ENCODE measurements at regions of chr3 and their contacts with region 1.

Region 1: GRCh38 chr3:19946832-19947548 is at the start of gene RAB5A:
- DNase-seq: peak; percentile 94 to 100 (median 97)
- ATAC-seq: peak; percentile 90
- H3K4me3 ChIP-seq: peak within 1 kb of the TSS; percentile 91
- H3K27ac ChIP-seq: peak within 1 kb of the TSS; percentile 98
- H3K4me1 ChIP-seq: peaks cover 9 to 11% of the 10 kb centered on the region in 2 experiments; a peak in 4 of 5 replicates
- H3K27me3 ChIP-seq: no peaks in the 10 kb centered on the region
- CTCF ChIP-seq: 0 out of 6 replicates have a peak, but pooled peaks of 1 of the 3 experiments have one; percentile 1
- EP300 ChIP-seq: no peak; the same call in 1 of the 2 replicates
- POLR2A ChIP-seq: peak; percentile 93
- RAD21 ChIP-seq: peak; percentile 4 to 34; a peak in 2 of 4 replicates
- polyA plus RNA-seq, gene RAB5A: 28.3 to 31.3 TPM

Region 2: GRCh38 chr3:19901337-19901736 is 45.7 kb before region 1 on chr3:
- CTCF ChIA-PET with region 1: no interaction called
- POLR2A ChIA-PET with region 1: no interaction called
- in situ Hi-C with region 1: no loop called
- intact Hi-C with region 1: loop called (anchors 5 kb)
- DNase-seq: no peak
- ATAC-seq: peak; percentile 39; the same call in 1 of the 3 replicates
- H3K4me3 ChIP-seq: no peak overlapping the region
- H3K27ac ChIP-seq: no peak overlapping the region
- H3K4me1 ChIP-seq: no peaks in the 10 kb centered on the region; a peak in 1 of 5 replicates
- H3K27me3 ChIP-seq: no peaks in the 10 kb centered on the region
- CTCF ChIP-seq: peak in 1 of 3 experiments; percentile 18; a peak in 1 of 6 replicates
- EP300 ChIP-seq: no peak
- POLR2A ChIP-seq: no peak
- RAD21 ChIP-seq: peak in 1 of 2 experiments; percentile 21; a peak in 1 of 4 replicates

Region 3: DNA sequence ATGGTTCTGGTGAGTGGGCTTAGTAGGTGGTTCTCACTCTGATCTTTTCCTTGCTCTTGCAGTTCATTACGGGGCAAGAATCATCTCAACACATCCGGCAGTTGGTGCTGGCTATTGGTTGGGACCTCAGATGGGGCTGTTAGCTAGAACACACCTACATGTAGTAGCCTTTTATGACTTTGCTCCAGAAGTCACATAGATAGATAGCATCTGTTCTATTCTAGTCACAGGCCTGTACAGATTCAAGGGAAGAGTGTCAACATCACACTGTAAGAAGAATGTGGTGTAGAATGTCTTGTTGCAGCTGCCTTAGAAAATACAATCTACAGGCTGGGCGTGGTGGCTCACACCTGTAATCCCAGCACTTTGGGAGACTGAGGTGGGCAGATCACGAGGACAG is 15.0 kb after region 1 on chr3:
- CTCF ChIA-PET with region 1: interaction called, 3 read pairs
- POLR2A ChIA-PET with region 1: interaction called, 34 read pairs
- in situ Hi-C with region 1: no loop called
- intact Hi-C with region 1: no loop called
- DNase-seq: peak in 2 of 4 experiments; percentile 18 to 30
- ATAC-seq: peak; percentile 50
- H3K4me3 ChIP-seq: no peak overlapping the region
- H3K27ac ChIP-seq: no peak overlapping the region
- H3K4me1 ChIP-seq: peaks cover 7 to 24% of the 10 kb centered on the region in 2 experiments; a peak in 4 of 5 replicates
- H3K27me3 ChIP-seq: no peaks in the 10 kb centered on the region
- CTCF ChIP-seq: no peak
- EP300 ChIP-seq: no peak
- POLR2A ChIP-seq: no peak
- RAD21 ChIP-seq: no peak

Region 4: GRCh38 chr3:20023623-20024405 is 76.8 kb after region 1 on chr3:
- CTCF ChIA-PET with region 1: no interaction called
- POLR2A ChIA-PET with region 1: interaction called, 4 read pairs
- in situ Hi-C with region 1: no loop called
- intact Hi-C with region 1: loop called (anchors 5 kb)
- DNase-seq: peak in 2 of 4 experiments; percentile 59 to 77
- ATAC-seq: peak; percentile 80
- H3K4me3 ChIP-seq: no peak overlapping the region
- H3K27ac ChIP-seq: peak overlapping the region; percentile 66
- H3K4me1 ChIP-seq: peaks cover 15 to 24% of the 10 kb centered on the region in 2 experiments; a peak in 4 of 5 replicates
- H3K27me3 ChIP-seq: no peaks in the 10 kb centered on the region
- CTCF ChIP-seq: no peak
- EP300 ChIP-seq: no peak
- POLR2A ChIP-seq: no peak
- RAD21 ChIP-seq: no peak

Region 5: DNA sequence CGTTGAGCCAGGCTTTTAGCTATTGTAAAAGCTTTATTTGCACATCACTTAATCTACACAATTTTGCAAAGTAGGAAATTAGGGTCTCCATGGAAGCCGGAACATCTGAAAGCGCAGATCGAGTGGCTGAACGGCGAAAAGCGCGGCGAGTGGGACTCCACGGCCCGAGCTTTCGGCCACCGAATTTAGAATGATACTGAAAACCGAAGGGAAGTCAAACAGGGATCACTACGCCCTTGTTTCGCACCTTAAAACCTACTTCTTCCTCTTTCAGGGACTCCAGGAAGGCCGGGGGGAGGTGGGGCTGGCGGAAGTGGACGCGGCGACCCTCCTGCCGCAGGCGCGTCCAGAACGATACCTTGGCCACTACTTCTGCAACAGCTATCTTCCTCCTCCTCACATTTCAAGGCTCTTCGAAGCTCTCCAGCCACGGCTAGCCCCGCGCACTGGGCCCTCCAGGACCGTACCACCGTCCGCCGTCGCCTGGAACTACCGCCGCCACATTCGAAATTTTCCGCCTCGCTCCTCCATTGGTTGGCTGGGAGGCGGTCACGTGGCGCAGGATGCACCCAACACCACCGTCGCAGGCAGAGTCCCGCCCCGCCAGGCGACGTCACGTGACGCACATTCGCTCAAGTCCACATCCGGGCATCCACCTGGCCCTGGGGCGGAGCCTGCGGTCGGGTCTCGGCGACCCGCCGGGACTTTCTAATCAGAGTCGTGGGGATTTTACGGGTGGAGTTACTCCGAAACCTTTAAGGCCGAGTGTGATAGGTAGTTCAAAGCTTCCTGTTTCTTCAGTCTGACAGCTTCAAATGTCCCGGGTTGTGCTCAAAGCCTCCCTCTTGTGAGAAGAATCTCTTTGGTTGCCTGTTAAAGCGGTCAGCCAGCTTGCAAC is 239.0 kb after region 1 on chr3 and contains the start of gene SGO1:
- CTCF ChIA-PET with region 1: no interaction called
- POLR2A ChIA-PET with region 1: interaction called, 3 read pairs
- in situ Hi-C with region 1: no loop called
- intact Hi-C with region 1: loop called (anchors 2 kb)
- DNase-seq: peak; percentile 98 to 100 (median 99)
- ATAC-seq: peak; percentile 94
- H3K4me3 ChIP-seq: peak within 1 kb of the TSS; percentile 61
- H3K27ac ChIP-seq: peak within 1 kb of the TSS; percentile 94
- H3K4me1 ChIP-seq: peaks cover 0 to 8% of the 10 kb centered on the region in 2 experiments; a peak in 2 of 5 replicates
- H3K27me3 ChIP-seq: no peaks in the 10 kb centered on the region
- CTCF ChIP-seq: no peak
- EP300 ChIP-seq: peak; percentile 9
- POLR2A ChIP-seq: peak; percentile 95
- RAD21 ChIP-seq: 0 out of 4 replicates have a peak, but pooled peaks of 1 of the 2 experiments have one; percentile 6
- polyA plus RNA-seq, gene SGO1: 13.7 to 17.0 TPM

Region 6: DNA sequence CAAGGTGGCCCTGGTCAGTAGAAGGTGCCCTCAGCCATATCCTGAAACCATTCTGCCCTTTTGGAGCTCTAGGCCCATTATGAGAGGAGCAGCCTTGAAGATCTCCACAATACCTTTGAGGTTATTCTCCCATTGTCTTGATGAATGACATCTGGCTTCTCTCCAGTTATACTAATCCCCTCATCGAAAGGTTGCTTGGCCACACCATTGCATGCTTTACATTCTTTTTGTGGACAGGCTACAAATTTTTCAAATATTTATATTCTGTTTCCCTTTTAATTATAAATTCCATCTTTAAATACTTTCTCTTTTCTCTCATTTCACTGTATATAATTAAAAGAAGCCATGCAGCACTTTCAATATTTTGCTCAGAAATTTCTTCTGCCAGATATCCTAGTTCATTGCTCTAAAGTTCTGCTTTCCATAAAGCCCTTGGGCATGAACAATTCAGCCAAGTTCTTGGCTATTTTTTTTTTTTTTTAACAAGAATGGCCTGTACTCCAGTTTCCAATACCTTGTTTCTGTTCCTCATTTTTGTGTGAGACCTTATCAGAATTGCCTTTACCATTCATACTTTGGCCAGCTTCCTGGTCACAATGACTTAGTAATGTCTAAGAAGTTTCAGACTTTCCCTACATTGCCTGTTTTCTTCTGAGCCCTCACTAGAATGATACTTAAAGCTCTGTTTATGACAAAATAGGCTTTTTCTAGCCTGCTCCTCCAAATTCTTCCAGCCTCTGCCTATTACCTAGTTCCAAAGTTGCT is 377.9 kb after region 1 on chr3:
- CTCF ChIA-PET with region 1: no interaction called
- POLR2A ChIA-PET with region 1: no interaction called
- in situ Hi-C with region 1: no loop called
- intact Hi-C with region 1: loop called (anchors 10 kb)
- DNase-seq: peak in 1 of 4 experiments; percentile 68
- ATAC-seq: peak; percentile 54
- H3K4me3 ChIP-seq: no peak overlapping the region
- H3K27ac ChIP-seq: peak overlapping the region; percentile 76
- H3K4me1 ChIP-seq: peaks cover 16 to 62% of the 10 kb centered on the region in 2 experiments
- H3K27me3 ChIP-seq: no peaks in the 10 kb centered on the region
- CTCF ChIP-seq: no peak
- EP300 ChIP-seq: peak; percentile 72
- POLR2A ChIP-seq: no peak
- RAD21 ChIP-seq: no peak

Measured in K562 (cell line).